Caco-2 (cell line): ENCODE measurements at regions of chrX and their contacts with region 1.

Region 1: DNA sequence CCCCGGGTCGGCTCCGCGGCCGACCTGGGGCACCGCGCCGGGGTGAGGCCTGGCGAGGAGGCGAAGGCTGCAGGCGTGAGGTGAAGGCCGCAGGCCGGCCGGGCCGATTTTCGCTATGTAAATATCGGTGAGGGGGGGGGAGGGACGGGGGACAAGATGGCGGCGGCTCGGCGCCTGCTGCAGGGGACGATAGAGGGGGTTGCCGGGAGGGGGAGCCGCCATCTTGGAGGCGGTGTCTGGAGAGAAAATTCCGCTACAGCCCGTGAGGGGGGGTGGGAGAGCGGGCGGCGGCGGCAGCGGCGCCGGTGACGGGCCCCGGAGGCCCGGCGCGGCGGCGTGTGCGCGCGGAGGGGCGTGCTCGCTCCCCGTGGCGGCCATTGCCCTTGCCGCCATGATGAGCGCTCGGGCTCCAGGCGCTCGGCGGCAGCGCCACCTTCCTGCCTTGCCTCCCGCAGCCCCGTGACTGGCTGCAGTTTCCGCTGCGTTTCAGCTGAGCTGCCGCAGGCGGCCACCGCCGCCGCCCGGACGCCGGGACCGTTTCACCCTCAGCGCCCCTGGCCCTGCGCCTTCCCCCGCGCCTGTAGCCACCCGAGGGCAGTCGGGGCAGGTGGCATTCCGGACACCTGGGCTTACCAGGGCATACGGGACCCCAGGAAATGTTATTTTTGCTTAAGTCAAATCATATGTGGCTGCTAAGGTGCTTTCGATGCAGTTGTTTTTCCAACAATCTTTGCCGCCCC is 692 bp downstream of the ZFX start:
- DNase-seq: peak; percentile 88 to 90
- H3K4me3 ChIP-seq: peak overlapping the region; percentile 75
- H3K4me3 Mint-ChIP-seq: peak overlapping the region; percentile 80
- H3K27ac Mint-ChIP-seq: peak overlapping the region; percentile 59
- H3K4me1 ChIP-seq: peaks cover 37% of the 10 kb centered on the region
- H3K4me1 Mint-ChIP-seq: peaks cover 18% of the 10 kb centered on the region
- H3K27me3 ChIP-seq: no peaks in the 10 kb centered on the region
- H3K27me3 Mint-ChIP-seq: no peaks in the 10 kb centered on the region
- CTCF ChIP-seq: peak; percentile 26 to 28

Region 2: DNA sequence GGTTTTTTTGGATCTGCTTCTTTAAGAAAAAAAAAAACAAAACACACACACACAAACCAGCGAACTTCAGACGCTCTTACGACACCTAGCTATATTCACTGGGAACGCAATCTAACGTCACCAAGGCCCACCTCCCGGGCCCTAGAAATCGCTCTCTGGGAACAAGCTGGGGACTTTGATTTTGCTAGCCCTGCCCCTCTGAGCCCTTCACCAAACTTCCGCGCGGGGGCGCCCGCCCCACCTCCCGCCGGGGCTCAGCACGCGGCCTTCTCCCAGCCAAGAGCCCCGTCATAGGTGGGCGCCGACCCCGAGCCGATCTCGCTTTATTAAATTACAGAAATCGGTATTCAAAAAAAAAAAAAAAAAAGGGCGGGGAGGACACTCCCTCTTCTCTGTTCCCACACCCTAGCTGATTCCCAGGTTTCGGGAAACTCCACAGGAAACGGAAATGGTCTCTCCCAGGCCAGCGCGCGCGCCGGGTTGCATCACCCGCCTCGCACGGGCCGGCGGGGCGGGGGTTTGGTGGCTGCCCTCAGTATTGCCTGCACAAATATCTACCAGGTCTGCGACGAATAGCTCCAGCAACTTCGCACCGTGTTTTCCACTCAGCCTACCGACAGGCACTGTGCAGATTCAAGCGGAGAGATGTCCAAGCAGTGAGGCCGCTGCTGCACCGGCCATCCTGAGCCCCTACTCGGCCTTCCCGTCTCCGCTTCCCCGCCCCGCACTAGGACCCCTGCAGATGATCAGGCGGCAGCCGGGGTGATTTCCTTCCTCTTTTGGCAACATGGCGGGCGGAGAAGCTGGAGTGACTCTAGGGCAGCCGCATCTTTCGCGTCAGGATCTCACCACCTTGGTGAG is 95.8 kb before region 1 on chrX and contains the start of gene EIF2S3:
- CTCF ChIA-PET with region 1: no interaction called
- POLR2A ChIA-PET with region 1: no interaction called
- intact Hi-C with region 1: loop called (anchors 1 kb)
- DNase-seq: peak; percentile 89 to 91
- H3K4me3 ChIP-seq: peak within 1 kb of the TSS; percentile 28
- H3K4me3 Mint-ChIP-seq: no peak within 1 kb of the TSS
- H3K27ac Mint-ChIP-seq: no peak within 1 kb of the TSS
- H3K4me1 ChIP-seq: no peaks in the 10 kb centered on the region
- H3K4me1 Mint-ChIP-seq: no peaks in the 10 kb centered on the region
- H3K27me3 ChIP-seq: no peaks in the 10 kb centered on the region
- H3K27me3 Mint-ChIP-seq: no peaks in the 10 kb centered on the region
- CTCF ChIP-seq: peak; percentile 58 to 73
- total RNA-seq, gene EIF2S3: 240 and 270 TPM in 2 replicates

Region 3: GRCh38 chrX:24081661-24082264 is 68.5 kb before region 1 on chrX:
- CTCF ChIA-PET with region 1: no interaction called
- POLR2A ChIA-PET with region 1: interaction called, 6 read pairs
- intact Hi-C with region 1: loop called (anchors 1 kb)
- DNase-seq: peak; percentile 74 to 81
- H3K4me3 ChIP-seq: no peak overlapping the region
- H3K4me3 Mint-ChIP-seq: no peak overlapping the region
- H3K27ac Mint-ChIP-seq: no peak overlapping the region
- H3K4me1 ChIP-seq: no peaks in the 10 kb centered on the region
- H3K4me1 Mint-ChIP-seq: no peaks in the 10 kb centered on the region
- H3K27me3 ChIP-seq: no peaks in the 10 kb centered on the region
- H3K27me3 Mint-ChIP-seq: no peaks in the 10 kb centered on the region
- CTCF ChIP-seq: peak; percentile 17 to 54

Region 4: DNA sequence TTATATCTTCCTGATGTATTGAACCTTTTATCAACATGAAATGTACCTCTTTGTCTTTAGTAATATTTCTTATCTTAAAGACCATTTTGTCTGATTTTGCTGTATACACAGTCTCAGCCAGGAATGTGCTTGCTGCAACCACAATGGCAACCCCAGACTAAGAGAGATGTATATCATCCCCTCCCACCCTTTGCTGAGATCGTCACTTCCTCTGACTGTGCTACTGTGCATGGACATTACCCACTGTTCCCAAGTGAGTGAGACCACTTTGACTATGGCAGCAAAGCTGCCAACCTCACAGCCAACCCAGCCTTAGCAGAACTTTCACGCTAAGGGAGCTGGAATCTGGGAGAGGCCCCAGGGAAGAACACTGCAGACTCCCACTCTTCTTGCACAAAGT is 49.5 kb before region 1 on chrX:
- CTCF ChIA-PET with region 1: no interaction called
- POLR2A ChIA-PET with region 1: no interaction called
- intact Hi-C with region 1: loop called (anchors 1 kb)
- DNase-seq: peak; percentile 33 to 47
- H3K4me3 ChIP-seq: no peak overlapping the region
- H3K4me3 Mint-ChIP-seq: peak overlapping the region; percentile 22
- H3K27ac Mint-ChIP-seq: peak overlapping the region; percentile 78
- H3K4me1 ChIP-seq: peaks cover 13% of the 10 kb centered on the region
- H3K4me1 Mint-ChIP-seq: peaks cover 23% of the 10 kb centered on the region
- H3K27me3 ChIP-seq: no peaks in the 10 kb centered on the region
- H3K27me3 Mint-ChIP-seq: no peaks in the 10 kb centered on the region
- CTCF ChIP-seq: no peak

Region 5: DNA sequence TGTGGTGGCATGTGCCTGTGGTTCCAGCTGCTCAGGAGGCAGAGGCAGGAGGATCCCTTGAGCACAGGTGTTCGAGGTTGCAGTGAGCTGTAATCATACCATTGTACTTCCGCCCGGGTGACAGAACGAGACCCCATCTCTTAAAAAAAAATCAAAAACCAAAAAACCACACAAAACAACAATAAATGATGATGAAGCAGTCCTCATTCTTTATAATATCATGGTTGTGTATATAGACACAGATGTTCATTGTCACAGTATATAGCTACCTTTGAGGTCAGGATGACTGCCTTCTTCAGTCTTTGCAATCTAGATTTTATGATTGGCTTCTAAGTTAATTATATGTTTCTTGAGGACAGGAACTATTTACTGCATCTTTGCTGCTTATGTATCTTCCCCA is 36.3 kb after region 1 on chrX:
- CTCF ChIA-PET with region 1: no interaction called
- POLR2A ChIA-PET with region 1: interaction called, 3 read pairs
- intact Hi-C with region 1: loop called (anchors 5 kb)
- DNase-seq: no peak
- H3K4me3 ChIP-seq: no peak overlapping the region
- H3K4me3 Mint-ChIP-seq: no peak overlapping the region
- H3K27ac Mint-ChIP-seq: no peak overlapping the region
- H3K4me1 ChIP-seq: peaks cover 36% of the 10 kb centered on the region
- H3K4me1 Mint-ChIP-seq: peaks cover 15% of the 10 kb centered on the region
- H3K27me3 ChIP-seq: no peaks in the 10 kb centered on the region
- H3K27me3 Mint-ChIP-seq: no peaks in the 10 kb centered on the region
- CTCF ChIP-seq: no peak

Region 6: GRCh38 chrX:24241822-24242648 is 91.8 kb after region 1 on chrX:
- CTCF ChIA-PET with region 1: no interaction called
- POLR2A ChIA-PET with region 1: no interaction called
- intact Hi-C with region 1: loop called (anchors 5 kb)
- DNase-seq: peak in 1 of 2 experiments; percentile 37
- H3K4me3 ChIP-seq: no peak overlapping the region
- H3K4me3 Mint-ChIP-seq: no peak overlapping the region
- H3K27ac Mint-ChIP-seq: no peak overlapping the region
- H3K4me1 ChIP-seq: no peaks in the 10 kb centered on the region
- H3K4me1 Mint-ChIP-seq: no peaks in the 10 kb centered on the region
- H3K27me3 ChIP-seq: no peaks in the 10 kb centered on the region
- H3K27me3 Mint-ChIP-seq: no peaks in the 10 kb centered on the region
- CTCF ChIP-seq: peak in 1 of 2 experiments; percentile 36

Region 7: GRCh38 chrX:24934279-24934678 is 784.1 kb after region 1 on chrX:
- CTCF ChIA-PET with region 1: no interaction called
- POLR2A ChIA-PET with region 1: no interaction called
- intact Hi-C with region 1: no loop called
- DNase-seq: no peak
- H3K4me3 ChIP-seq: no peak overlapping the region
- H3K4me3 Mint-ChIP-seq: no peak overlapping the region
- H3K27ac Mint-ChIP-seq: no peak overlapping the region
- H3K4me1 ChIP-seq: no peaks in the 10 kb centered on the region
- H3K4me1 Mint-ChIP-seq: no peaks in the 10 kb centered on the region
- H3K27me3 ChIP-seq: no peaks in the 10 kb centered on the region
- H3K27me3 Mint-ChIP-seq: no peaks in the 10 kb centered on the region
- CTCF ChIP-seq: no peak

Region 8: DNA sequence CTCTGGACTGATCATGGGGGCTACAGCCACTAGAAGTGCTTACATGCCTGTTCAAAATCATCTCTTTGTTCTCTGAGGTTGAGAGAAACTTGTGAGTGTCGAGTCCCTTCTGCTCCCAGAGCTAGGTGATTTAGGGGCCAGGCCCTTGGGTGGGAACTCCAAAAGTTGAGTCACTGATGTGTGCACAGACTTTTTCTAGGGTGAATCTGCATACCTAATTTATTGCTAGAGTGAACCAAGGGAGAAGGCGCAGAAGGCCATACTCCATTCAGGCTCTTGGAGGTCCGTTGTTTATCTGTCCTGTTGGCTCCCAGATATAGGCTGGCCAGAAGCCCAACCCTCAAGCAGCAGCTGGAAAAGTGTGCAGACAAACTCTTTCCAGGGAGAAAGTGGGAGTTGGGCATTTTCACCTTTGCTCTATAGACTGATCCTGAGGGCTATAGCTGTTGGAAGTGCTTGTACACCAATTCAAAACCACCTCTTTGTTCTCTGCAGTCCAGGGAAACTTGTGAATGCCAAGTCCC is 946.4 kb after region 1 on chrX:
- CTCF ChIA-PET with region 1: no interaction called
- POLR2A ChIA-PET with region 1: no interaction called
- intact Hi-C with region 1: no loop called
- DNase-seq: no peak
- H3K4me3 ChIP-seq: no peak overlapping the region
- H3K4me3 Mint-ChIP-seq: no peak overlapping the region
- H3K27ac Mint-ChIP-seq: no peak overlapping the region
- H3K4me1 ChIP-seq: no peaks in the 10 kb centered on the region
- H3K4me1 Mint-ChIP-seq: no peaks in the 10 kb centered on the region
- H3K27me3 ChIP-seq: no peaks in the 10 kb centered on the region
- H3K27me3 Mint-ChIP-seq: peaks cover 3% of the 10 kb centered on the region
- CTCF ChIP-seq: no peak